H1 (cell line): ENCODE measurements at regions of chr3 and their contacts with region 1.

Region 1: DNA sequence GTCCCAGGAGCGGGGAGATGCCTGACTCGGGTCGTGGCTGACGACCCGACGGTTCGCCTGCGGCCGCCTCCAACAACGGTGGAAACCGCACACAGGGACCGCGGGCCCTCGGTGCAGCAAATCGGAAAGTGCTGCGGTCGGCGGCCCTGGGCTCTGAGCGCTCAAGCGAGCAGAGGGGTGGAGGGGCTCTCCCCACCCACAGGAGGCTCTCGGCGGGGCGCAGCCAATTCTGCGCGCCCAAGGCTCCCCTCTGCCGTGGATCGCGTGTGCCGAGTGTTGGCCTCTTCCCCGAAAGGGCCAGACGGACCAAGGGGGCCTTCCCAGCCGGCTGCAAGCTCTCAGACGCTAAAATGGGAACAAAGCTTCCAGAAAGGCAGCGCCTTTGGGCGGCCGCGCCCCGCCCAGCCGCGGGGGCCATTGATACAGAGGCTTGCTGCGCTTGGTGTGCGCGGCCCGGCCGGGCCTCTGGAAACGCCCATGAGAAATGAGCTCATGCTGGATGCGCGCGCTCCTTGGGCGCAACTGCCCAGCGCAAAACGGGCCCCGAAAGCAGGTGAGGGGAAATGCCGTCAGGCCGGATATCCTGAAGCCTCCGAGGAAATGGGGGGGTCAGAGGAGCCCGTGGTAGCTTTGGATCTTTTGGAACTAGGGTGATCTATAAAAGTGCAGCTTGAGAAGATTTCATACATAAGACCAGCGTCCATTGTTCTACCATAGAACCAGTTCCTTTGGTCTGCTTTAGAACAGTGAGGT is 1.2 kb upstream of the GSK3B start:
- DNase-seq: peak; percentile 72 to 85
- H3K4me3 ChIP-seq: peak overlapping the region; percentile 86 to 99 (median 94)
- H3K27ac ChIP-seq: peak overlapping the region; percentile 99
- H3K4me1 ChIP-seq: peaks cover 0 to 2% (median 0%) of the 10 kb centered on the region in 4 experiments; a peak in 4 of 7 replicates
- H3K27me3 ChIP-seq: no peaks in the 10 kb centered on the region
- CTCF ChIP-seq: no peak
- EP300 ChIP-seq: no peak
- POLR2A ChIP-seq: peak; percentile 92 to 99
- RAD21 ChIP-seq: no peak; a peak in 1 of 4 replicates

Region 2: GRCh38 chr3:120081719-120082118 is 13.7 kb before region 1 on chr3:
- CTCF ChIA-PET with region 1: interaction called, 3 read pairs
- POLR2A ChIA-PET with region 1: interaction called, 30 read pairs
- DNase-seq: no peak
- H3K4me3 ChIP-seq: no peak overlapping the region
- H3K27ac ChIP-seq: no peak overlapping the region
- H3K4me1 ChIP-seq: peaks cover 0 to 2% (median 0%) of the 10 kb centered on the region in 4 experiments; a peak in 3 of 7 replicates
- H3K27me3 ChIP-seq: no peaks in the 10 kb centered on the region
- CTCF ChIP-seq: no peak
- EP300 ChIP-seq: no peak
- POLR2A ChIP-seq: no peak
- RAD21 ChIP-seq: no peak

Region 3: GRCh38 chr3:120172070-120172469 is 76.7 kb after region 1 on chr3:
- CTCF ChIA-PET with region 1: no interaction called
- POLR2A ChIA-PET with region 1: interaction called, 12 read pairs
- DNase-seq: no peak
- H3K4me3 ChIP-seq: no peak overlapping the region
- H3K27ac ChIP-seq: no peak overlapping the region
- H3K4me1 ChIP-seq: no peaks in the 10 kb centered on the region; a peak in 1 of 7 replicates
- H3K27me3 ChIP-seq: no peaks in the 10 kb centered on the region
- CTCF ChIP-seq: no peak
- EP300 ChIP-seq: no peak
- POLR2A ChIP-seq: no peak
- RAD21 ChIP-seq: no peak

Region 4: GRCh38 chr3:120348981-120349818 is 253.8 kb after region 1 on chr3 and contains the start of gene LRRC58:
- CTCF ChIA-PET with region 1: no interaction called
- POLR2A ChIA-PET with region 1: interaction called, 14 read pairs
- DNase-seq: peak; percentile 31 to 86
- H3K4me3 ChIP-seq: peak within 1 kb of the TSS; percentile 73 to 88 (median 76)
- H3K27ac ChIP-seq: peak within 1 kb of the TSS; percentile 25; the same call in 1 of the 2 replicates
- H3K4me1 ChIP-seq: peaks cover 0 to 4% (median 2%) of the 10 kb centered on the region in 4 experiments; a peak in 2 of 7 replicates
- H3K27me3 ChIP-seq: peaks cover 0 to 6% (median 3%) of the 10 kb centered on the region in 4 experiments; a peak in 3 of 7 replicates
- CTCF ChIP-seq: peak; percentile 18 to 25 (median 24)
- EP300 ChIP-seq: peak; percentile 1 to 4; a peak in 2 of 3 replicates
- POLR2A ChIP-seq: peak in 1 of 2 experiments; percentile 90; a peak in 2 of 3 replicates
- RAD21 ChIP-seq: no peak; a peak in 1 of 4 replicates
- total RNA-seq, gene LRRC58: 15.4 TPM in 2 replicates